Activated CD4-positive, alpha-beta T cell treated with anti-CD3 and anti-CD28 coated beads for 36 hours (primary cell): ENCODE measurements at regions of chr14 and their contacts with region 1.

Region 1: DNA sequence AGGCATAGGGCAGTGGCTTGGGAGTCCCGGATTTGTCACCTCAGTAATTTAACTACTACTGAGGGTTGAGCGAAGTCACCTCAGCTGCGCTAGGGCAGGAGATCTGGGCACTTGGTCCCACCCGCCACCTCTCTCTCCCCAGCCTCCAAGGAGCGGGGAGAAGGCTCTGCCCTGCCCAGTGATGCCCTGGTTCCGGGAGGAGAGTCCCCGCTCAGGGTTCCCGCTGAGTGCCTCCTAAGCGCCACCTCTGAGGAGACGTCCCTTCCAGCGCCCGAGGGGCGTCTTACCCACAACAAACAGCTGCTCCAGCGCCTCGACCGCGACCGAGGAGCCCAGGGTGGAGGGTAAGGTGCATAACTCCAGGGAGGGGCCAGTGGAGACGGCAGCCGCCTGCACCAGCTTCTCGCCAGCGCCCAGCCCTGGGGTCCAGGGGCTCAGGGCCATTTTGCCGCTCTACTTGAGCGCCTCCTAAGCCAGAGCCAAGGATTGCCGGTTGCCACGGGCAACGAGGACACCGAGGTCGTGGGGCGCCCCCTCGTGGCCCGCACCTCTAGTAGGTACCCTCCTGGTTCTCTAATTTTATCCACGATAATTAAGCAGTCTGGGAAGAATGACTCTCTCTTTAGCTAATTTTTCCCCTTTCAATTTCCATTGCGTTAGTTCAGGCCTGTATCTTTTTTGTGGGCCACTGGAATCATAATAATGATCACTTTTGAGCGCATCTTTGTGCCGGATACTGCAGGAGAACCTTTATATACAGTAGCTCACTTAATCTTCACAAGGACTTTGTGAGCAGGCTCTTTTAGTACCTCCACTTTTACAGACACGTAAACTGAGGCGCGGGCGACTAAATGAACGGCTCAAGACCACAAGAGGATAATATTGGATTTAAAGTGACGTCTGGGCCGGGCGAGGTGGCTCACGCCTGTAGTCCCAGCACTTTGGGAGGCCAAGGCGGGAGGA is at the start of gene CCDC175:
- DNase-seq: peak; percentile 93
- ATAC-seq: peak; percentile 99
- H3K4me3 Mint-ChIP-seq: peak within 1 kb of the TSS; percentile 68
- H3K27ac Mint-ChIP-seq: no peak within 1 kb of the TSS
- H3K4me1 Mint-ChIP-seq: peaks cover 7% of the 10 kb centered on the region
- H3K27me3 Mint-ChIP-seq: peaks cover 12% of the 10 kb centered on the region
- total RNA-seq, gene CCDC175: not detected

Region 2: GRCh38 chr14:59126710-59127432 is 449.7 kb before region 1 on chr14:
- CTCF ChIA-PET with region 1: interaction called, 6 read pairs
- POLR2A ChIA-PET with region 1: no interaction called
- intact Hi-C with region 1: loop called (anchors 1 kb)
- DNase-seq: peak; percentile 33
- ATAC-seq: peak; percentile 77
- H3K4me3 Mint-ChIP-seq: no peak overlapping the region
- H3K27ac Mint-ChIP-seq: no peak overlapping the region
- H3K4me1 Mint-ChIP-seq: no peaks in the 10 kb centered on the region
- H3K27me3 Mint-ChIP-seq: peaks cover 8% of the 10 kb centered on the region

Region 3: GRCh38 chr14:59483900-59484638 is 92.5 kb before region 1 on chr14 and contains the starts of genes JKAMP and L3HYPDH:
- CTCF ChIA-PET with region 1: interaction called, 3 read pairs
- POLR2A ChIA-PET with region 1: no interaction called
- intact Hi-C with region 1: loop called in 1 of 2 experiments (anchors 1 kb)
- DNase-seq: peak; percentile 99
- ATAC-seq: peak; percentile 97
- H3K4me3 Mint-ChIP-seq: peak within 1 kb of the TSS; percentile 92
- H3K27ac Mint-ChIP-seq: peak within 1 kb of the TSS; percentile 89
- H3K4me1 Mint-ChIP-seq: peaks cover 57% of the 10 kb centered on the region
- H3K27me3 Mint-ChIP-seq: no peaks in the 10 kb centered on the region
- total RNA-seq, gene JKAMP: 18.0 to 20.2 TPM
- total RNA-seq, gene L3HYPDH: 9.3 to 11.8 TPM

Region 4: GRCh38 chr14:59507063-59507780 is 69.4 kb before region 1 on chr14:
- CTCF ChIA-PET with region 1: interaction called, 33 read pairs
- POLR2A ChIA-PET with region 1: no interaction called
- intact Hi-C with region 1: loop called (anchors 1 kb)
- DNase-seq: peak; percentile 76
- ATAC-seq: peak; percentile 95
- H3K4me3 Mint-ChIP-seq: no peak overlapping the region
- H3K27ac Mint-ChIP-seq: no peak overlapping the region
- H3K4me1 Mint-ChIP-seq: peaks cover 5% of the 10 kb centered on the region
- H3K27me3 Mint-ChIP-seq: peaks cover 3% of the 10 kb centered on the region